ENCODE measurements at regions of chrX and their contacts with region 1.

Region 1: DNA sequence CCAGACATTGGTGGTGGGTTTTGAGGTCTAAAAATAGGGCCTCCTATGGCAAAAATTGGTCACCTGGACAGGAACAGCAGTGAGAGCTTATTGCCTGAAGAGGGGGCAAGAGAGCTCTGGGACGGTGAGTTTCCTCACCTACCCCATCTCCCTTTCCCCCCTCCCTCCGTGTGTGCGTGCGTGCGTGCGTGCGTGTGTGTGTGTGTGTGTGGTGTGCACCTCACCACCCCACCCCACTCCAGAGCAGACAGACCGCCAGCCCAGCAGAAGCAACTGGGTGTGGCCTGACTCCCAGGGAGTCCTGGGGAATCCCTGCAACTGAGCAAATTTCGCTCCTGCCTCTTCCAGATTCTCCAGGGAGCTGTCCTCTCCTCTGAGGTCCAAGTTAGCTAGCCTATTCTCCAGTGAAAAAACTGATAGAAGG is 44.7 kb downstream of the PRPS1 start:
- DNase-seq: peak; percentile 88
- H3K4me3 Mint-ChIP-seq: peak overlapping the region; percentile 51
- H3K27ac Mint-ChIP-seq: peak overlapping the region; percentile 83
- H3K4me1 Mint-ChIP-seq: peaks cover 42% of the 10 kb centered on the region
- H3K27me3 Mint-ChIP-seq: no peaks in the 10 kb centered on the region

Region 2: GRCh38 chrX:107654872-107655761 is 17.9 kb before region 1 on chrX:
- CTCF ChIA-PET with region 1: interaction called, 10 read pairs
- POLR2A ChIA-PET with region 1: no interaction called
- intact Hi-C with region 1: no loop called
- DNase-seq: peak; percentile 73
- H3K4me3 Mint-ChIP-seq: no peak overlapping the region
- H3K27ac Mint-ChIP-seq: no peak overlapping the region
- H3K4me1 Mint-ChIP-seq: peaks cover 13% of the 10 kb centered on the region
- H3K27me3 Mint-ChIP-seq: no peaks in the 10 kb centered on the region

Region 3: DNA sequence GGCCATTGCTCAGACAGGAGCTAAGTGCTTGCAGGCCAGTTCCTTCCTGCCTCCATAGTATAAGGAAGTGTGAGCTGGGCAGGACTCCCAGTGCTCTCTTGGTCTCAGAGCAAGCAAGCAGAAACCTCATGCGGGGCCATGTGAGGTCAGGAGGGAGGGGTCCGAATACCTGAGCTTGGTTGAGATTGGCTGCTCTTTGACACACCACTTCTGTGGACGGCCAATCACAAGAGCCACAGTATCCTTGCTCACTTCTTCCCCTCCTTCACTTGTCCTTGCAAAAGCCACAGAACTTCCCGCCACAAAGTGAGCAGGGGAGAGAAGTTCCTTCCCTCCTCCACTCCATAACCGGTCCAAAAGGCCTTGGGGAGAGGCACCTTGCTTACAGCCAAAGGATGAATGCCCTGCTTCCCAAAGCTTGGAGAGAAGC is 12.0 kb after region 1 on chrX:
- CTCF ChIA-PET with region 1: interaction called, 4 read pairs
- POLR2A ChIA-PET with region 1: interaction called, 12 read pairs
- intact Hi-C with region 1: no loop called
- DNase-seq: peak; percentile 57
- H3K4me3 Mint-ChIP-seq: no peak overlapping the region
- H3K27ac Mint-ChIP-seq: no peak overlapping the region
- H3K4me1 Mint-ChIP-seq: peaks cover 35% of the 10 kb centered on the region
- H3K27me3 Mint-ChIP-seq: no peaks in the 10 kb centered on the region

Region 4: DNA sequence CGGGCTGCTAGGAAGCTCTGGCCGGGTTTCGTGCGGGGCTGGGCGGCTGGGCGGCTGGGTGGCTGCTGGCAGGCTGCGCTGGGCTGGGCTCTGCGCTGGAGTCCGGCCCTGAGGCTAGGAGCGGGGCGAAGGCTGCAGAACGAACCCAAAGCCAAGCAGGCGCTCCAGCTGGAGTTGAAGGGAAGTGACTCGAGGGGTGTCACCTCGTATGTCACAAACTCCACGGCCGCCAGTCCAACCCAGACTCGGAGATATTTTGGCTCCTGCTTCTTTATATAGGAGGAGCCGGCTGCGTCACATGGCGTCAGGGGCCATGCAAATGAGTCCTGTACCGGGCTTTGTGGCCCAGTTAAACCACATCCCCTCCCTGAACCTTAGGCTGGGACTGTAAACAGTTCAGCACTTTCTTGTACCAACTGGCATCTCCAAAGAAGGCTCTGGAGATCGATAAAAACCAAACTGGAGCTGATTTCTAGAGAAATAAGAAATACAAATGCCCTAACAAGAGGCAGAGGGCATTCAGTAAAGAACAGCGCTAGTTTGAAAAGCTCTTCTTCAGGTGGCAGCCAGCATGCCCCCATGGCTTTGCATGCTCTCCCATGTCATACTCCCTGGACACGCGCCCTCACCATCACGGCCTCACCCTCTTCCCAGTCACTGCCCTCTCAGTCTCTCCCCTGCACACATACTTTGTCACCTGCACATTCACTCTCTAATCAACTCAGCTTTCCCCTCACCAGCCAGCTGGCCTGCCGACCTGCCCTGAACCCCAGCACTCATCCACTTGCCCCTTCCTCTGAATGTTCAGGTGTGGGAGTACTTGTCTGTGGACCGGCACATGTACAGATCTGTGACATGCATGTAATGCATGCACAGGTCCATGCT is 44.1 kb after region 1 on chrX:
- CTCF ChIA-PET with region 1: interaction called, 275 read pairs
- POLR2A ChIA-PET with region 1: interaction called, 253 read pairs
- intact Hi-C with region 1: loop called (anchors 1 kb)
- DNase-seq: peak; percentile 91
- H3K4me3 Mint-ChIP-seq: peak overlapping the region; percentile 89
- H3K27ac Mint-ChIP-seq: peak overlapping the region; percentile 90
- H3K4me1 Mint-ChIP-seq: peaks cover 44% of the 10 kb centered on the region
- H3K27me3 Mint-ChIP-seq: no peaks in the 10 kb centered on the region

Region 5: DNA sequence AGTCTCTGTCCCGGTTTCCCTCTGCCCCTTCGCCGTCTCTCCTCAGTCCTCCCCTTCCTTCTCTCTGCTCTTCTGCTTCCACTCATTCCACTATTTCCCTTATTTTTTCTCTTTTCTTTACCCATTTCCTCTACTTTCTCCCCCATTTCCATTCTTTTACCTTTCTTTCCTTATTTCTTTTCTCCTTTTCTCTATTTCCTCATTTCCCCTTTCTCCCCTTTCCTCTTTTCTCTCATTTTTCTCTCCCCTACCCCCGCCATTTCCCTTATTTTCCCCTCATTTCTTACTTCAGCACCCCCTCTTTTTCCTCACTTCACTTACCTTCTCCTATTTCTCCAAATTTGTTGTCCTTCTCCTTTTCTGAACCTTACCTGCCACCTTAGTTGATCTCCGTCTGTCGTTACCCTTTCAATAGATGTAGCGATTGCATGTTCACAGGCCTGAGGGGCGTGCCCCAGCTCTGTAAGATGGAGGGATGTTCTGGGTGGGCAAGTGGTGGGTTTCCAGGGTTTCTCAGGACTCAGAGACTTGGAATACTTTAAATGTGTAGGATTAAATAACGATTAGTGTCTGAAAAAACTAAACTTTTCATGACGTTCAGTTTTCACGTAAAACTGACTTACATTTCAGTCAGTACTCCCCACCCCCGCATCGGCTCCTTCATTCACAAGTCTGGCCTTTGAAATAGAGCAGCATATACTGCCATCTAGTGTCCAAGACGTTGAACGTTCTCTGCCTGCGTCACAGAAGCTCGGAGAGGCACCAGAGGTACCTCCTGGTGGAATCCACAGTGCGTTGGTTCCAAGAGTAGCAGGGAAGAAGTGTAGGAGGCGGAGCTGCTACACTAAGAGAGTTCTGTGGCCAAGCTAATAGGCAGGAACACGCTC is 103.9 kb after region 1 on chrX:
- CTCF ChIA-PET with region 1: interaction called, 48 read pairs
- POLR2A ChIA-PET with region 1: interaction called, 6 read pairs
- intact Hi-C with region 1: loop called (anchors 1 kb)
- DNase-seq: peak; percentile 84
- H3K4me3 Mint-ChIP-seq: peak overlapping the region; percentile 86
- H3K27ac Mint-ChIP-seq: no peak overlapping the region
- H3K4me1 Mint-ChIP-seq: peaks cover 7% of the 10 kb centered on the region
- H3K27me3 Mint-ChIP-seq: no peaks in the 10 kb centered on the region

Region 6: GRCh38 chrX:107787827-107788226 is 114.9 kb after region 1 on chrX:
- CTCF ChIA-PET with region 1: no interaction called
- POLR2A ChIA-PET with region 1: no interaction called
- intact Hi-C with region 1: no loop called
- DNase-seq: no peak
- H3K4me3 Mint-ChIP-seq: no peak overlapping the region
- H3K27ac Mint-ChIP-seq: no peak overlapping the region
- H3K4me1 Mint-ChIP-seq: no peaks in the 10 kb centered on the region
- H3K27me3 Mint-ChIP-seq: no peaks in the 10 kb centered on the region

Region 7: GRCh38 chrX:107845625-107846024 is 172.7 kb after region 1 on chrX:
- CTCF ChIA-PET with region 1: interaction called, 3 read pairs
- POLR2A ChIA-PET with region 1: no interaction called
- intact Hi-C with region 1: loop called (anchors 1 kb)
- DNase-seq: peak; percentile 44
- H3K4me3 Mint-ChIP-seq: no peak overlapping the region
- H3K27ac Mint-ChIP-seq: no peak overlapping the region
- H3K4me1 Mint-ChIP-seq: peaks cover 9% of the 10 kb centered on the region
- H3K27me3 Mint-ChIP-seq: no peaks in the 10 kb centered on the region

Region 8: DNA sequence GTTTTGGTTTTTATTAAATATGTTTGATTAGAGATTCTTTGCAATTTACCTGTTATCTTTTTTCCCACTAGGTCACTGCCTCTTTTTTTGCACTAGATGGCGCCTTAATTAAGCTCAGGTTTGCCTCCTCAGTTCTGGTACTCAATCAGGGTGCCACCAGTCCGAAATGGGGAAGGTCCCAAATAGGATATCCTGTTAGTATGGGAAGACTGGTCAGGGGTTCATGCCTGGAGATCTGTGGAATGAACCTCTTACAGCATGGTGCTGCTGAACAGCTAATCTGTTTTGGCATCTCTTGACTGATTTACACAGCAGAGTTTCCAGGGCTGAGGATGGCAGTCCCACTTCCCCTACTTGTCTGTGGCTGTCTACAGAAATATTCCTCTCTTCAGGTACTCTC is 347.7 kb after region 1 on chrX:
- CTCF ChIA-PET with region 1: no interaction called
- POLR2A ChIA-PET with region 1: no interaction called
- intact Hi-C with region 1: loop called (anchors 5 kb)
- DNase-seq: no peak
- H3K4me3 Mint-ChIP-seq: peak overlapping the region; percentile 48
- H3K27ac Mint-ChIP-seq: peak overlapping the region; percentile 77
- H3K4me1 Mint-ChIP-seq: peaks cover 66% of the 10 kb centered on the region
- H3K27me3 Mint-ChIP-seq: no peaks in the 10 kb centered on the region